ENCODE measurements at regions of chr17 and their contacts with region 1.

Region 1: DNA sequence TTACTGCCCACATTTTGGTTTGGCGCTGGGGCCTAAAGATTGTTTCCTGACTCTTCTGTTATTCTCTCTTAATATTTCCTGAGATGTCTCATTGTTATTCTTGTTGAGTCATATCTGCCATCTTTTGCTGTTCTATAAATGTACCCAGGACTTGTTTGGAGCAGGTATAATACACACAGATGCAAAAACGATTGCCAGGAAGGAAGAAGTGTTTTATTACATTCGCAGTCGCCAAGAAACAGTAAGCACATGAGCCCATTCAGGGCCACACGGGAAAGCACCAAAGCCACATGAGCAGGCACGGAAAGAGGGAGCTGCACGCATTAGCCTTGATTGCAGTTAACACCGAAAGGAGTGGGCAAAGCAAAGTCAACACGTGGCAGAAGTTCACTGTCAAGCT is 70.2 kb downstream of the ARHGAP44 start:
- DNase-seq: no peak
- H3K4me3 ChIP-seq: no peak overlapping the region
- H3K27ac ChIP-seq: no peak overlapping the region
- H3K4me1 ChIP-seq: no peaks in the 10 kb centered on the region
- H3K27me3 ChIP-seq: no peaks in the 10 kb centered on the region
- CTCF ChIP-seq: no peak
- POLR2A ChIP-seq: no peak

Region 2: DNA sequence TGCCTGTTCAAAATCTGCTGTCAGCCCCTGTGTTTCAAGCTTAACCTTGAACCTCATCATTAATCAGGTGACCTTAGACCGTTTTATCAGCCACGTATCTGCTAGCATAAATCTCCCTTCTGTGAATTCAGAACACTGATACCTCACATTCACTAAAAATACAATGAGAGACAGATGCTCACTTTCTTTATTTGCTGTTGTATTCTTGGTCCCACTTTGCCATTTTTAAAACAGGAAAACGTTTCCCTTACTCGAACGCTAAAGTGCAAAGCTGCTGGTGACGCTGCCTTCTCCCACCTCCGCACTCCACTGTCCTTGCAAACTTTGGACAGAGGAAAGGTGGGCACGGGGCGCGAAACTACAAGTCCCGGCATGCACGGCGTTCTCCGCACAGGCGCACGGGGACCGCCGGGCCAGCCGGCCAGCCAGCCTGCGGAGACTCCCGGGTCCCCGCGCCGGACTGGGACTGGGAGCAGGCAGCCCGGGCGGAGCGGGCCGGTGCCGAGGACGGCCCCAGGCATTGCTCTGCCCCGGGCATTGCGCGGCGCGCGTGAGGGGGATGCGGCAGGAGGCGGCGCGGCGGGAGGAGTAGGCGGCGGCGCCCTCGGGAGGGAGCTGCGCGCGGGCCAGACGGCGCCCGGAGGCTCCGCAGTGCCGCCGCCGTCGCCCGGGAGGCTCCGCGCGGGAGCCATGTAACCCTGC is 70.3 kb before region 1 on chr17 and contains the start of gene ARHGAP44:
- CTCF ChIA-PET with region 1: no interaction called
- POLR2A ChIA-PET with region 1: no interaction called
- dilution Hi-C with region 1: no loop called
- intact Hi-C with region 1: no loop called
- DNase-seq: peak; percentile 49
- H3K4me3 ChIP-seq: peak within 1 kb of the TSS in 1 of 3 experiments; percentile 45
- H3K27ac ChIP-seq: no peak within 1 kb of the TSS
- H3K4me1 ChIP-seq: no peaks in the 10 kb centered on the region
- H3K27me3 ChIP-seq: peaks cover 0 to 14% of the 10 kb centered on the region in 2 experiments
- CTCF ChIP-seq: no peak
- POLR2A ChIP-seq: no peak
- total RNA-seq, gene ARHGAP44: 0.42 and 0.55 TPM in 2 replicates

Region 3: DNA sequence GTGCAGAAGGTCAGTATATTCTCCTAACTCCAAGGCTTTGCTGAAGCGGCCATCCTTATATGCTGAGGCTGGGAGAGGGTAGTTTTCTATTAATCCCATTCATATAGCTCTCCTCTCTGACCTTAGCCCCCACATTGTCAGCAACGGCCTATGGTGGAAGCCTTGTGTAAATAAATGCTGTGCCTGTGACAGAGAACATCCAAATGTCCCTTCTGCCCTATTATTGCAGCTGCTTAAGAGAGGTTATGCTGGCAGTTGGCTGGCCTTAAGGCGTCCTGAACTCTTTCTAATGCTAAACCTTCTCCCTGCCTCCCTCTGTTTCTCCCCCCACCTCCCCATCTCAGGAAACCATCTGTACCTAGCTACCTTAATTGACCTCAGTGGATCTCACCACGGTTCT is 16.6 kb before region 1 on chr17:
- CTCF ChIA-PET with region 1: no interaction called
- POLR2A ChIA-PET with region 1: no interaction called
- dilution Hi-C with region 1: no loop called
- intact Hi-C with region 1: no loop called
- DNase-seq: no peak
- H3K4me3 ChIP-seq: no peak overlapping the region
- H3K27ac ChIP-seq: no peak overlapping the region
- H3K4me1 ChIP-seq: no peaks in the 10 kb centered on the region
- H3K27me3 ChIP-seq: no peaks in the 10 kb centered on the region
- CTCF ChIP-seq: no peak
- POLR2A ChIP-seq: no peak

Region 4: DNA sequence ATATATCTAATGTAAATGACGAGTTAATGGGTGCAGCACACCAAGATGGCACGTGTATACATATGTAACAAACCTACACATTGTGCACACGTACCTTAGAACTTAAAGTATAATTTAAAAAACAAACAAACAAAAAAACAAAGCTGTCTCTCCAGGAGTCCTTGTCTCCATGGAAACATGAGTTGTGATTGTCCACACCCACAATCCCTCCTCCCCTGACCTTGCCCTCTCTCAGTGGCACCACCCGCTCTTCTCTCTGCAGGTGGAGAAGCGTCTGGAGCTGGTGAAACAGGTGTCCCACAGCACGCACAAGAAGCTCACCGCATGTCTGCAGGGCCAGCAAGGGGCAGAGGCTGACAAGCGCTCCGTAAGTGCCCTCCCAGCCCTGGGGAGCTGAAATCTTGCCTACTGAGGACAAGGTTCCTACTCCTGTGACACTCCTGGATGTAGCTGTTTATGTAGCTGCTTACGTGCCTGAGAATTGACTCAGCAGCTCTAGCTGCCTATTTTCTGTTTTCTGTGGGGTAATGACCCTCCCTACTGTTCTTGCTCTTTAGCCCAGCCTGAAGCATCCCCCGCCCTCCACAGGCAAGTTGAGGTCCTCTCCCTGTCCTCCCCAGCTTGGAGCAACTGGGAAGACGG is 36.7 kb after region 1 on chr17:
- CTCF ChIA-PET with region 1: no interaction called
- POLR2A ChIA-PET with region 1: no interaction called
- dilution Hi-C with region 1: no loop called
- intact Hi-C with region 1: no loop called
- DNase-seq: no peak
- H3K4me3 ChIP-seq: no peak overlapping the region
- H3K27ac ChIP-seq: no peak overlapping the region
- H3K4me1 ChIP-seq: no peaks in the 10 kb centered on the region
- H3K27me3 ChIP-seq: no peaks in the 10 kb centered on the region
- CTCF ChIP-seq: no peak
- POLR2A ChIP-seq: no peak

Region 5: GRCh38 chr17:12974005-12974531 is 114.5 kb after region 1 on chr17:
- CTCF ChIA-PET with region 1: no interaction called
- POLR2A ChIA-PET with region 1: no interaction called
- dilution Hi-C with region 1: loop called (anchors 25 kb)
- intact Hi-C with region 1: no loop called
- DNase-seq: no peak
- H3K4me3 ChIP-seq: no peak overlapping the region
- H3K27ac ChIP-seq: no peak overlapping the region
- H3K4me1 ChIP-seq: no peaks in the 10 kb centered on the region
- H3K27me3 ChIP-seq: no peaks in the 10 kb centered on the region
- CTCF ChIP-seq: no peak
- POLR2A ChIP-seq: no peak